H1 (cell line): ENCODE measurements at regions of chr11 and their contacts with region 1.

Region 1: GRCh38 chr11:66386171-66387069 is 14.9 kb upstream of the SLC29A2 start:
- DNase-seq: peak; percentile 75 to 97
- H3K4me3 ChIP-seq: peak overlapping the region in 3 of 4 experiments; percentile 16 to 46 (median 23); a peak in 6 of 8 replicates
- H3K27ac ChIP-seq: no peak overlapping the region
- H3K4me1 ChIP-seq: no peaks in the 10 kb centered on the region
- H3K27me3 ChIP-seq: no peaks in the 10 kb centered on the region
- CTCF ChIP-seq: peak; percentile 79 to 99 (median 89)
- EP300 ChIP-seq: no peak
- POLR2A ChIP-seq: no peak
- RAD21 ChIP-seq: peak; percentile 75 to 78

Region 2: GRCh38 chr11:66344550-66345315 is 41.7 kb before region 1 on chr11 and contains the start of gene BRMS1:
- CTCF ChIA-PET with region 1: interaction called, 13 read pairs
- POLR2A ChIA-PET with region 1: interaction called, 487 read pairs
- DNase-seq: peak; percentile 86 to 98
- H3K4me3 ChIP-seq: peak within 1 kb of the TSS; percentile 75 to 100 (median 92)
- H3K27ac ChIP-seq: peak within 1 kb of the TSS; percentile 61; the same call in 1 of the 2 replicates
- H3K4me1 ChIP-seq: peaks cover 0 to 15% (median 9%) of the 10 kb centered on the region in 4 experiments; a peak in 6 of 7 replicates
- H3K27me3 ChIP-seq: peaks cover 0 to 2% (median 0%) of the 10 kb centered on the region in 4 experiments; a peak in 3 of 7 replicates
- CTCF ChIP-seq: no peak
- EP300 ChIP-seq: no peak
- POLR2A ChIP-seq: peak in 1 of 2 experiments; percentile 96; a peak in 2 of 3 replicates
- RAD21 ChIP-seq: no peak
- total RNA-seq, gene BRMS1: 44.8 and 46.1 TPM in 2 replicates

Region 3: DNA sequence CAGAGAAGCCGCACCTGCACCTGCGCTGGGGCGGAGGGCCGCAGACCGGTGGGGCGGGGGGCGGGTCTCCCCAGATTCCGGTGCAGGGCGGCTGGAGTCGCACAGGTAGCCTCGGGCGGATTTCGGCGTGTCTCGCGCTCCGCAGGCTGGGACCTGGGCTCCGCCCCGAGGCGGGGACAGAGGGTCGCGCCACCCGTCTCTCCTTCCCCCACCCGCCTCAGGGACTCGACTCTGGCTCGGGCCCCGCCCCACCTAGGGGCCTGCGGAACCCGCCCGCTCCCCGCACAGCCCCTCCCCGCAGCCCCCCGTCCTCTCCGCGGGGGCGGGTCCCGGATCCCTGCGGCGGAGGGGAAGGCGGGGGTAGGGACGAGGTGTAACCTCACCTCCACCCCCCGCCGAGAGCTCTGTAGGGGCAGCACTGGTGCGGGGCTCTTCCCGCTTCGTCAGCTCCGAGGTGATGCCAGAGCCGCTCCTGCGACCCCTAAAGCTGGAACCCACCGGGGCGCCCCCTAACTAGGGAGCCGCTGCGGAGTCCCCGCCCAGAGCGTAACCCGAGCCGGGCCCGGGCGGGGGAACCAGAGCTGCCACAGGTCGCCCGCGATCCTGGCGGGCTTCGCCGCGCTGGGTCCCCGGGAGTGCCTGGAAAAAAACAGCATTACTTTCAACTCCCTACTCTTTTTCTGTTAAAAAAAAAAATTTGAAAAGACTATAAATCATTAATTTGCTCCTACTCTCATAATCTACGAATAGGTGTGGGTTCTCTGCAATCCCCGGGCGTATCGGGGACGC is 14.6 kb before region 1 on chr11 and contains the start of gene SLC29A2:
- CTCF ChIA-PET with region 1: interaction called, 51 read pairs
- POLR2A ChIA-PET with region 1: interaction called, 7 read pairs
- DNase-seq: peak; percentile 92 to 94
- H3K4me3 ChIP-seq: peak within 1 kb of the TSS; percentile 77 to 93 (median 82)
- H3K27ac ChIP-seq: peak within 1 kb of the TSS; percentile 86
- H3K4me1 ChIP-seq: peaks cover 0 to 8% (median 7%) of the 10 kb centered on the region in 4 experiments; a peak in 6 of 7 replicates
- H3K27me3 ChIP-seq: no peaks in the 10 kb centered on the region
- CTCF ChIP-seq: no peak
- EP300 ChIP-seq: no peak
- POLR2A ChIP-seq: 0 out of 3 replicates have a peak, but pooled peaks of 1 of the 2 experiments have one; percentile 33
- RAD21 ChIP-seq: no peak
- total RNA-seq, gene SLC29A2: 29.3 and 32.4 TPM in 2 replicates

Region 4: GRCh38 chr11:66421492-66422205 is 35.2 kb after region 1 on chr11:
- CTCF ChIA-PET with region 1: interaction called, 23 read pairs
- POLR2A ChIA-PET with region 1: interaction called, 3 read pairs
- DNase-seq: peak; percentile 85 to 99
- H3K4me3 ChIP-seq: peak overlapping the region; percentile 17 to 61 (median 54); a peak in 7 of 8 replicates
- H3K27ac ChIP-seq: no peak overlapping the region
- H3K4me1 ChIP-seq: peaks cover 3 to 20% (median 8%) of the 10 kb centered on the region in 4 experiments
- H3K27me3 ChIP-seq: peaks cover 13 to 28% (median 26%) of the 10 kb centered on the region in 4 experiments
- CTCF ChIP-seq: peak in 1 of 3 experiments; percentile 25; a peak in 1 of 4 replicates
- EP300 ChIP-seq: peak; percentile 39 to 59; a peak in 2 of 3 replicates
- POLR2A ChIP-seq: peak in 1 of 2 experiments; percentile 22; a peak in 1 of 3 replicates
- RAD21 ChIP-seq: peak in 1 of 2 experiments; percentile 49; a peak in 2 of 4 replicates

Region 5: DNA sequence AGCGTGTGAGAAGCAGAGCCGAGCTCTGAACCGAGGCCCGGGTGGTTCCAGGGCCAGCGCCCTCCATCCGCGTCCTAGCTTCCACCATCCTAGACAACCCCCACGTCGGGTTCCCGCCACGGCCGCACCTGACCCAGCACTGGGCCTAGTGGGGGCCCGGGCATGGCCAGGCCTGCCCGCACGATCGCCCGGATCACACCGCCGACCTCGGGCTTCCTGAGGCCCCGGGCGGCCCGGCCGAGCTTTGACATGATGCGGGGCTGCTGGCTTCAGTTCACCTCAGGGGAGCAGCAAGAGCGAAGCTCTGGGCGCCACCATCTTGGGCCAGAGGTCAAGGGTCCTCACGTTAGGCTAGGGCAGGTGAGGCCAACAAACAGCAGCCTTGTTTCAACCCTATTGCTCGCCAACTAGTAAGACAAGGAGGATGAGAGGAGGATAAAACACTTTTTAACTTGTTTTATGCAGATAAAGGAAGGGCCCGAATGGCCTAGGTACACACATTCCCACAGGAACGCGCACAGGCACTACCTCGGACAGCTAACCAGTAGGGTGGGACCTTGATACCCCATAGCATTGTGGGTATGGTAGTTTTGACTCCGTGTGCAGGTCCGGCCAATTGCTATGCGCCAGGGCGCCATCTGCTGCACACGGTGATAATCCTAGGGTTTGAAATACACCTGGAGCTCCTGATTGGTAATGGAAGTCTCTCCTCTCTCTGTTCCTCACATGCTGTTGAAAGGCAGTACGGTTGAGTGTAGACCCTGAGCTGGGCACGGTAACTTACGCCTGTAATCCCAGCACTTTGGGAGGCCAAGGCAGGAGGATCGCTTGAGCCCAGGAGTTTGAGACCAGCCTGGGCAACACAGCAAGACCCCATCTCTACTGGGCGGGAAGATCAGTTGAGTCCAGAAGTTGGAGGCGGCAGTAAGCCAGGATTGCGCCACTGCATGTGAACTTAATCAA is 52.4 kb after region 1 on chr11 and contains the start of gene MRPL11:
- CTCF ChIA-PET with region 1: interaction called, 17 read pairs
- POLR2A ChIA-PET with region 1: interaction called, 8 read pairs
- DNase-seq: peak; percentile 84 to 94
- H3K4me3 ChIP-seq: peak within 1 kb of the TSS; percentile 85 to 98 (median 88)
- H3K27ac ChIP-seq: peak within 1 kb of the TSS; percentile 98
- H3K4me1 ChIP-seq: peaks cover 0 to 5% (median 2%) of the 10 kb centered on the region in 4 experiments; a peak in 2 of 7 replicates
- H3K27me3 ChIP-seq: no peaks in the 10 kb centered on the region
- CTCF ChIP-seq: peak; percentile 72 to 92 (median 77)
- EP300 ChIP-seq: no peak
- POLR2A ChIP-seq: peak; percentile 73 to 74
- RAD21 ChIP-seq: peak; percentile 54 to 64
- total RNA-seq, gene MRPL11: 141 and 152 TPM in 2 replicates